HepG2 (cell line): ENCODE measurements at regions of chrX and their contacts with region 1.

Region 1: DNA sequence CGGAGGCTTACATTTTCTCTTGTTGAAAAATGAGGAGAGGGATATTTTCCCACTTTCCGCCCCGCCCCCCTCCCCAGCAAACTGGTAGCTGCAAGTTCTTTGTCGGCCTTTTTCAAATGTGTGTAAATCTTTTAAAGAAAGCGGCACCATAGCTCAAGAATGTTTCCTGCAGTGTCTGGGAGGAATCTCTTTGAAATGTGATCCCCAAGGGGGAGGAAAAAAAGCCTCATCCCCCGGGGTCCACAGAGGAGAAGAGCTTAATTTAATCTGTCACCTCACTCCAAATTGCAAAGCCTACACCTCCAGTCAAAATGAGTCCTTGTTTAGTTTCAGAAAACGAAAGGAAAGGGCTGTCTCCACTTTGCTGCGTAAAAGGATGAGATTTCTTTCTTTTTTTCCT is 34.8 kb downstream of the ASMT start:
- DNase-seq: no peak
- ATAC-seq: no peak
- H3K4me3 ChIP-seq: no peak overlapping the region
- H3K27ac ChIP-seq: no peak overlapping the region
- H3K4me1 ChIP-seq: no peaks in the 10 kb centered on the region
- H3K27me3 ChIP-seq: no peaks in the 10 kb centered on the region
- CTCF ChIP-seq: no peak
- EP300 ChIP-seq: no peak
- POLR2A ChIP-seq: no peak
- RAD21 ChIP-seq: no peak

Region 2: GRCh38 chrX:2595258-2595657 is 945.6 kb after region 1 on chrX:
- CTCF ChIA-PET with region 1: no interaction called
- POLR2A ChIA-PET with region 1: no interaction called
- in situ Hi-C with region 1: loop called (anchors 10 kb)
- intact Hi-C with region 1: loop called (anchors 1 kb)
- DNase-seq: no peak
- ATAC-seq: no peak
- H3K4me3 ChIP-seq: no peak overlapping the region
- H3K27ac ChIP-seq: no peak overlapping the region
- H3K4me1 ChIP-seq: peaks cover 5% of the 10 kb centered on the region; the same call in 1 of the 2 replicates
- H3K27me3 ChIP-seq: no peaks in the 10 kb centered on the region
- CTCF ChIP-seq: no peak
- EP300 ChIP-seq: no peak
- POLR2A ChIP-seq: no peak
- RAD21 ChIP-seq: no peak

Region 3: DNA sequence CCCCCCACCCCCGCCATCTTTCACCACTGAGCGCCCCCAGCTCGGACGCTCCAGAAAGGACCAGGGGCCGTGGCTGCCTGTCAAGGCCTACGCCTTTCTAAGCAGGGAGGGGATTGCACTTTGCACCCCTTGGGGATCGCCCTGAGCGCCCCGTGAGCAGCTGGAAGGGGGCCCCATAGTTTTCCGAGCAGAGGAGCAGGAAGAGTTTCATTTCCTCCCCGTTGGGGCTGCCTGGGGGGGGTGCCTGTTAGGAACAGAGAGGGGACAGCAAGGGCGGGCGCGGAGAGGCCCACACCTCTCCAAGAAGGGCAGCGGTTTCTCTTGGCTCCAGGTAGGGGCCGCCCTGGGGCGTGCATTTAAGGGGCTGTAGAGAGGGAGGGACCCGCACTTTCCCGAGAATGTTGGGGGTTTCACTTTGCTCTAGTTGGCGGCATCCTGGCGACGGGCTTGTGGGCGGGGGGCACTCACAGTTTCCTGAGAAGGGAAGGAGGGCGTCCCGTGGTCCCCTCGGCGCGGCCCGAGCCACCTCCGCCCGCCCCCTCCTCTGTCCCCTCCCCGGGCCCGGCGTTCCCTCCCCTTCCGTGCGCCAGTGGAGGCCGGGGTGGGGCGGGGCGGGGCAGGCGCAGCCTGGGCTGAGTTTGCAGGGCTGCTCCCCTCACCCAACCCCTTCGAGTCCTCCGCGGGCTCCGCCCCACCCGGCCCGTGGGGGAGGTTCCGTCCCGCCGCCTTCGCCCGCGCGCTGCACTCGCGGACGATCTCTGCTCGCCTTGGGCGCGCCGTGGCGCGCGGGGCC is 959.2 kb after region 1 on chrX:
- CTCF ChIA-PET with region 1: no interaction called
- POLR2A ChIA-PET with region 1: no interaction called
- in situ Hi-C with region 1: loop called (anchors 10 kb)
- intact Hi-C with region 1: no loop called
- DNase-seq: peak; percentile 72
- ATAC-seq: peak; percentile 95
- H3K4me3 ChIP-seq: peak overlapping the region; percentile 64 to 99 (median 83)
- H3K27ac ChIP-seq: peak overlapping the region; percentile 92
- H3K4me1 ChIP-seq: peaks cover 32% of the 10 kb centered on the region
- H3K27me3 ChIP-seq: no peaks in the 10 kb centered on the region; a peak in 1 of 5 replicates
- CTCF ChIP-seq: peak; percentile 3
- EP300 ChIP-seq: no peak; a peak in 1 of 4 replicates
- POLR2A ChIP-seq: peak in 1 of 2 experiments; percentile 62; a peak in 2 of 4 replicates
- RAD21 ChIP-seq: no peak

Region 4: DNA sequence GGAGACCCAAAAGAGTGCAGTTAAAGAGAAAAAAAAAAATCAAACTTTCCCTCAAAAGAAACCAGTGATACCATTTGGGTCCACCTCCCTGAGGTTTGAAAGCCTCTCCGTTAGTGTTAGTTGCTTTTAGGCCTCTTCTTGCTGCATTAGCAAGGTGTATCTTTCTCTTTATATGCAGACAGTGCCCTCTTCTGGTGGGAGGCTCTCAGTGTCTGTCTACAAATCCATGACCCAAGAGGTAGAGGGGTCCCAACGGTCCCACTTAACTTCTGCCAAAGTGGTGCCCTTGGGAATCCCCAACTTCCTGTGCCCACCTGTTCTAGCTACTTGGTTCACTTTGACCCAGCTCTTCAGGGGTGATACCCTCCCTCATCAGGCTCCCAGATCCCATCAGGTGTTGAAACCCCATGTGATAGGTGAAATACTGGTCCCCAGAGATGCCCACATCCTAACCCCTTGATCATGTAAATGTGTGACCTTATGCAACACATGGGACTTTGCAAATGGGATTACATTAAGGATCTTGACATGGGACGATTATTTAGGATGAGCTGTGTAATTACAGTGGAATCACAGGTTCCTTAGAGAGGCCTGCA is 977.7 kb after region 1 on chrX:
- CTCF ChIA-PET with region 1: no interaction called
- POLR2A ChIA-PET with region 1: no interaction called
- in situ Hi-C with region 1: no loop called
- intact Hi-C with region 1: loop called (anchors 1 kb)
- DNase-seq: peak; percentile 71
- ATAC-seq: peak; percentile 92
- H3K4me3 ChIP-seq: no peak overlapping the region
- H3K27ac ChIP-seq: no peak overlapping the region
- H3K4me1 ChIP-seq: no peaks in the 10 kb centered on the region
- H3K27me3 ChIP-seq: no peaks in the 10 kb centered on the region
- CTCF ChIP-seq: peak; percentile 74
- EP300 ChIP-seq: no peak
- POLR2A ChIP-seq: no peak
- RAD21 ChIP-seq: peak; percentile 69